A673 (cell line): ENCODE measurements at regions of chr7 and their contacts with region 1.

Region 1: DNA sequence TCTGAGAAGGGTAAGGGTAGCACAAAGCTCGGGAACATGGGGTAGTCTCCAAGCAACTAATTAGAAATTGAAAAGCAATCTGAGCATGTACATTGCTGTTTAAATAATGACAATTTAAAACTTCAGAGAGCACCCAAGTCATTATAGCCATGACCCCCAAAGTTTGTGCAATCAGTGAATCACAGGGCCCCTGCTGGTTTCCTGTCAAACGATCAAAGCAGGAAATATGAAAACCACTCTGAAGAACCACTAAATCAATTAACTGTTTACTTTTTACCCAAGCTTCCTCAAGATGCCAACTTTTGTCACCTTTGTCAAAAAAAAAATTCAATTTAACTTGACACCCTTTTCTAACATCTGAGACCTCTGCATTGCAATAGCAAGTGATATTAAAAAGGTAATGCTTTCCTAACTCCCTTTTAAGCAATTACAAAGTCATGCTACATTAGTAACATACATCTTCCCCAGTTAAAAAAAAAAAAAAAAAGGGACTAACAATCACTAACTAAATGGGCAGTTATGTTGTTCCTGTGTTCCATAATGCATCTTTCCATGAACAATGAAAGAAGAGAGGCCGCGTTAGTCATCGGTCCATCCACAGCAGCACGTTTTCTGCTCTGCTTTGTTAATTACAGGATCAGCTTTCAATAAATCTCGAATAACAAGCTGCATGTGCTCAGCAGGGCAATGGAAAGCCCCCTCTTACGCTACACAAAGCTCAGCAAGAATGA is 80.6 kb downstream of the ETV1 start:
- DNase-seq: peak; percentile 90
- H3K4me3 ChIP-seq: no peak overlapping the region
- H3K27ac ChIP-seq: peak overlapping the region; percentile 46
- H3K4me1 ChIP-seq: peaks cover 81% of the 10 kb centered on the region
- H3K27me3 ChIP-seq: no peaks in the 10 kb centered on the region
- CTCF ChIP-seq: no peak

Region 2: GRCh38 chr7:14457568-14458453 is 549.0 kb after region 1 on chr7:
- CTCF ChIA-PET with region 1: no interaction called
- POLR2A ChIA-PET with region 1: no interaction called
- intact Hi-C with region 1: loop called (anchors 5 kb)
- DNase-seq: peak; percentile 88
- H3K4me3 ChIP-seq: peak overlapping the region; percentile 15
- H3K27ac ChIP-seq: no peak overlapping the region
- H3K4me1 ChIP-seq: no peaks in the 10 kb centered on the region
- H3K27me3 ChIP-seq: no peaks in the 10 kb centered on the region
- CTCF ChIP-seq: peak; percentile 86

Region 3: GRCh38 chr7:15043931-15044330 is 1135.1 kb after region 1 on chr7:
- CTCF ChIA-PET with region 1: no interaction called
- POLR2A ChIA-PET with region 1: no interaction called
- intact Hi-C with region 1: no loop called
- DNase-seq: peak; percentile 2
- H3K4me3 ChIP-seq: no peak overlapping the region
- H3K27ac ChIP-seq: no peak overlapping the region
- H3K4me1 ChIP-seq: no peaks in the 10 kb centered on the region
- H3K27me3 ChIP-seq: no peaks in the 10 kb centered on the region
- CTCF ChIP-seq: no peak